ENCODE measurements at regions of chr5 and their contacts with region 1.

Region 1: GRCh38 chr5:124902097-124902821 is 155.8 kb upstream of the ZNF608 start:
- DNase-seq: no peak

Region 2: GRCh38 chr5:124536333-124536732 is 365.9 kb before region 1 on chr5:
- intact Hi-C with region 1: loop called (anchors 10 kb)
- DNase-seq: no peak

Region 3: DNA sequence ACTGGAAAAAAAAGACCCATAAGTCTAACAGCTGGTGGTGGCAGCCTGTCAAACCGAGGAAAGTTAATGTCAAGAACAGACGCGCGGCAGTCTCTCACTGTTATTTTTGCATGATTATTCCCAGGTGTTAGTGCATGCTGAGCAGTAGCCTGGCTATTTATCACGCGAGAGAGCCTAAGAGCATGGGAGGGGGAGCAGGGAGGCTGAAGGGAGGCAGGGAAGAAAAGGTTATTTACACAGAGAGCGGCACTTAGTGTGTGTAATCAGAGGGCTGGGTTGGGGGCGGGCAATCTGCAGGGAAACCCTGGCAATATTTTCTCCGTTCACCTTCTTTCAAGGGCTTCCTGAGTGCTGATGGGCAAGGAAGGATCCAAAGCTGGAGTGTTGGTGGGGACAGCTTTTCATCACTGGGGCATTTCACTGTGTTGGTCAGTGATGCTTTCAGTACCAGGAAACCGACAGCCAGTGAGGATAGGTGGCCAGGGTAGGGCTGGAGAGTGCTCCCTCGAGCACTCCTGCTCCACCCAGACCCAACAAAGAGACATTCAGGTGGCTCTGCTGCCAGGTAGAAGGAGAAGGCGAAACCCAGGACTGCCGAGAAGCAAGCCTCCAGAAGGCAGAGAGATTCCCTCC is 195.4 kb before region 1 on chr5:
- intact Hi-C with region 1: loop called (anchors 5 kb)
- DNase-seq: peak; percentile 77

Region 4: DNA sequence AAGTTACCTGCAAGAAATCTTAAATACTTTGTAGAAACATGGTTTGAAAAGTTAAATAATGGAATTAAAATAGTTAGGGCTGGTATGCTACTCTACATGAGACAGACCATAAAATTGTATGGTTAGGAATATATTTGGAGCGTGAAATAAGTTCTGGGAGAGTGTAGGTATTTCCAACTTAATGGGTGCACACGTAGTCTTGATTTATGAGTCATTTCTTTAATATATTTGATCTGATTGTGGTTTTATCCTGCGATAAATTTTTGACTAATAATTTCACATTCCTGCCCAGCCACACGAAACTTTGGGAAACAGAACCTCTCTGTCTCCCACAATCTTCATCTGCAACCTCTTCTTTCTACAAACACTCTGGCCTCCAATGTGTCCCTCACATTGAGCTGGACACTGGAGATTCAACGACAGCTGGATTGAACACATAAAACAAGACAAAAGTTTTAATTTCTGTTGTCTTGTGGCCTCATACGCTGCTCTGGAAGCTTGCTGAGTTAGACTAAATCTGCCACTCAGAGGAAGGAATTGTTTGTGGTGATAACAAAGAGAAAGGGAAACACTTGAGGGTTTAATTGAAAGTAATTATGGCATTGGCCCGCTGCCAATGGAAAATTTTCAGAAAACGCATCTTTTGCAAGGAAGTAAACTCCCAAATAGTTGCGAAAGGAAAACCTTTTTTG is 45.9 kb after region 1 on chr5:
- intact Hi-C with region 1: loop called (anchors 5 kb)
- DNase-seq: no peak

Region 5: DNA sequence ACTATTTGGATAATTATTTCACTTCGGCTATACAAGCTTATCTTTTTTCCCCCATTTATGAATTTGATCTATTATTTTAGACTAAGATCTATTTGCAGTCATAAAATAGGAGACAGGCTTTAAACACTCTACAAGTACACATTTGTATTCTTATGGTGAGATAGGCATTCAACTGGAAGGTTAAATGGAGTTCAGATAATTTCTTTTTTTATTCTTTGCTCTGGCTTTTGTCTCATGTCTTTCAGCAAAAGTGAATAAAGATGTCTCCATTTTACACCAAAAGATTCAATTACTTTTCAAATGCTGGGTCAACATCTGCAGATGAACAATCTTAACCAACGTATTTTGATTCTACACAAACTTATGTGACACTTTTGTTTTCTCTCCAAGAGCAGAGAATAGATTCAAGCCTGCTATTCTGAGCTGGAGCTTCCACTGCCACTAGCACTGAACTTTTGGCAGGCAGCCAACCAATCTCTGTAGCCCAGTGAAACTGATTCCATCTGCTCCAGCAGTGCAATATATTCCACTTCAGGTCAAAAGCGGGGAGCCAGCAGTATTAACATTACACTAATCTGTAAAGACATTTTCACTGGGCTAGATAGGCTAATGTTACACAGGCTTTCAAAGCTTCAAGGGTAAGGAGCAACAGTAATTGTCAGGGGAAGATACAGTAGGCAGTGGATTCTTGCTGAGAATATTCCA is 296.2 kb after region 1 on chr5:
- intact Hi-C with region 1: loop called (anchors 5 kb)
- DNase-seq: peak; percentile 85